Sigmoid colon (tissue), 7 donors: ENCODE measurements at regions of chr6 and their contacts with region 1.

Region 1: DNA sequence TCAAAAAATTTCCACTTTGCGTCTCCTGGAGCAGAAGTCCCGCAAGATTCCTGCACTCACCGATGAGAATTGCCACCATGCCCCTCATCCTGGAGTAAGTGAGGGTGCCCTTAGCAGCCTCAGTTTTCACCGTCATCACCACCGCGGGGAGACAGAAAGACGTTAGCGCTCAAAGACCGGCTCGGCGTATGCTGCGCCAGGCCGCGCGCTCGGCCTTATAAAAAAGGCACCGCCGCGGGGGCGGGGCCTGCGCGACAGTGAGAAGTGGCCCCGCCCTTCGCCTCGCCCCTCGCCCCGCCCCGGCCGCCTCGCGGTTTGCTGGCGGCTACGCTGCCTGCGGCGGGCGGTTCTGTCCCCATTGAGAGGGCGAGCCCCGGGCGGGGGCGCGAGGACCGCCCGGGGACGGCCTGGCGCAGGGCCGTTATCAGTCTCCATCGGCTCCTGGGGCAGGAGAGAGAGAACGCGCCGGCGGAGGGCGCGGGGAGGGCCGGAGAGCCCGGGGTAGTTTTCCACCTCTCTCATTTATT is 122.3 kb upstream of the SLC2A12 start:
- DNase-seq: peak; percentile 93
- H3K4me3 ChIP-seq: peak overlapping the region; percentile 56 to 75 (median 72)
- H3K27ac ChIP-seq: peak overlapping the region; percentile 80 to 97 (median 88)
- H3K4me1 ChIP-seq: peaks cover 0 to 32% (median 26%) of the 10 kb centered on the region in 4 donors
- H3K27me3 ChIP-seq: peaks cover 0 to 37% (median 0%) of the 10 kb centered on the region in 3 donors
- CTCF ChIP-seq: no peak
- EP300 ChIP-seq: peak in 1 of 4 donors; percentile 2
- POLR2A ChIP-seq: peak; percentile 70 to 74

Region 2: DNA sequence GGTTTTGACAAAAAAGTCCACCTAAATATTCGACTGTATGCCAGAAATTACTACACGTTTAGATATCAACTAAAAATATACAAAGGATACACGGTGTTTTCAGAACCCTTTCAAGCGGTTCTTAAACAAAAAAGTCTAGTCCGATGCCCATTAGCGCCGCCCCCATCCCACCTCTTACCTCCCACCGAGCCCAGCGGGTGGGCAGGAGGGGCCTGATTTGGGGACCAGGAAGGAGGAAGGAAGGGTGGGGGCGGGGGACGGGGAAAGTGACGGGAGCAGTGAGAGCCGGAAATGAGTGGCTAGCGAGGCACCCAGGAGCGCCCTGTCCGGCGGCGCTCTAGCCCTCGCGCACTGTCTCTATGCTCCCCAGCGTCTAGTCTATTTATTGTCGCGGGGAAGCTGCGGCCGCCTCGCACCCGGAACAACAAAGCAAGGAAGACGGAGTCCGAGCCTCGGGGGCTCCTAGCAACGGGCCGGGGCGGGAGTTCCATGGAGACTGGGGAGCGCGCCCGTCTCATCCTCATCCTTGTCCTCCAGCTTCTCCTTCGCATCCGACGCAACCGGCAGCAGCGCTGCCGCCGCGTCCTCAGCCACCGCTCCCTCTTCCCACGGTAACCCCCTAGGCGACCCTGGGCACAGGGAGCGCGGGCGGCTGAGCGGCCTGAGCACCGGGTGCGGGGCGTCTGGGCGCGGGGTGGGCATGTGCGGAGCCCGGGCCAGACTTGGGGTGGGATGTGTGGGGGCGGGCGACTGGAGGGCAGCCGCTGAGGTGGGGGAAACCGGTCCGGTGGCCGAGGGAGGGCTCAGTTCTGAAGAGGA is 221.7 kb before region 1 on chr6 and contains the start of gene TBPL1:
- intact Hi-C with region 1: loop called (anchors 10 kb)
- DNase-seq: peak; percentile 96
- H3K4me3 ChIP-seq: peak within 1 kb of the TSS; percentile 93 to 98 (median 95)
- H3K27ac ChIP-seq: peak within 1 kb of the TSS; percentile 91 to 97 (median 95)
- H3K4me1 ChIP-seq: peaks cover 0 to 29% (median 25%) of the 10 kb centered on the region in 4 donors
- H3K27me3 ChIP-seq: no peaks in the 10 kb centered on the region
- CTCF ChIP-seq: no peak
- EP300 ChIP-seq: no peak
- POLR2A ChIP-seq: peak; percentile 24 to 47
- total RNA-seq, gene TBPL1: 6.6 to 13.2 (median 8.4) TPM

Region 3: GRCh38 chr6:134272374-134272773 is 97.6 kb after region 1 on chr6:
- intact Hi-C with region 1: no loop called
- DNase-seq: no peak
- H3K4me3 ChIP-seq: no peak overlapping the region
- H3K27ac ChIP-seq: no peak overlapping the region
- H3K4me1 ChIP-seq: no peaks in the 10 kb centered on the region
- H3K27me3 ChIP-seq: no peaks in the 10 kb centered on the region
- CTCF ChIP-seq: no peak
- EP300 ChIP-seq: no peak
- POLR2A ChIP-seq: no peak

Region 4: GRCh38 chr6:134640975-134641429 is 466.3 kb after region 1 on chr6:
- intact Hi-C with region 1: loop called (anchors 2 kb)
- DNase-seq: peak; percentile 81
- H3K4me3 ChIP-seq: no peak overlapping the region
- H3K27ac ChIP-seq: no peak overlapping the region
- H3K4me1 ChIP-seq: peaks cover 0 to 12% (median 7%) of the 10 kb centered on the region in 4 donors
- H3K27me3 ChIP-seq: no peaks in the 10 kb centered on the region
- CTCF ChIP-seq: peak; percentile 61 to 86 (median 78)
- EP300 ChIP-seq: no peak
- POLR2A ChIP-seq: no peak

Region 5: GRCh38 chr6:134822920-134823709 is 648.4 kb after region 1 on chr6:
- intact Hi-C with region 1: loop called (anchors 5 kb)
- DNase-seq: no peak
- H3K4me3 ChIP-seq: no peak overlapping the region
- H3K27ac ChIP-seq: no peak overlapping the region
- H3K4me1 ChIP-seq: peaks cover 0 to 19% (median 7%) of the 10 kb centered on the region in 4 donors
- H3K27me3 ChIP-seq: no peaks in the 10 kb centered on the region
- CTCF ChIP-seq: peak; percentile 32 to 74 (median 62)
- EP300 ChIP-seq: no peak
- POLR2A ChIP-seq: no peak

Region 6: GRCh38 chr6:134882426-134883038 is 707.8 kb after region 1 on chr6:
- intact Hi-C with region 1: loop called (anchors 1 kb)
- DNase-seq: peak; percentile 78
- H3K4me3 ChIP-seq: no peak overlapping the region
- H3K27ac ChIP-seq: no peak overlapping the region
- H3K4me1 ChIP-seq: no peaks in the 10 kb centered on the region
- H3K27me3 ChIP-seq: peaks cover 0 to 12% (median 0%) of the 10 kb centered on the region in 3 donors
- CTCF ChIP-seq: peak; percentile 46 to 90 (median 87)
- EP300 ChIP-seq: no peak
- POLR2A ChIP-seq: no peak

Region 7: DNA sequence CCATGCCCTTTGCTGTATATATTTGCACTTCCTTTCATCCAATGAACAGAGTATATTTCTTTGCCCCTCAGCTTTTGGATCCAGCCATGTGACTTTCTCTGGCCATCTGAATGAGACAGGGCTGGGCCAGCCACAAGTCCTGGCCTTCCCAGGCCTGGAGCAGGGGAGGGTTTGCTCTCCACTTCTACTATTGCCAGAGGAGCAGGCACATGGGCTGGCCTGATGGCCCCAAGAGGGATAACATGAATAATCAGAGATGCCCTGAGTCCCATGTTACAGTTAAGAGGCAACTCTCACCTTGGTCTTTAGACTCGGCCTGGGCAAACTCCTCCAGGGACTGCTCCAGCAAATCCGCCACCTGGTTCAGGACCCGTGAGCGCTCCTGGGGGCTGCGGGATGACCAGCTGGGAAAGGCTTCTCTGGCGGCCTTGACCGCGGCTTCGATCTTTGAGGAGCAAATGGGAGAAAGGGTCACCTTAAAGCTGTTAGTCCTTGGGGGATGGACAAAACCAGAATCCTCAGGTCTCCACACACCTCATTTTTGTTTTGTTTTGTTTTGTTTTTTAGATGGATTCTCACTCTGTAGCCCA is 768.9 kb after region 1 on chr6:
- intact Hi-C with region 1: loop called (anchors 5 kb)
- DNase-seq: no peak
- H3K4me3 ChIP-seq: no peak overlapping the region
- H3K27ac ChIP-seq: no peak overlapping the region
- H3K4me1 ChIP-seq: no peaks in the 10 kb centered on the region
- H3K27me3 ChIP-seq: no peaks in the 10 kb centered on the region
- CTCF ChIP-seq: no peak
- EP300 ChIP-seq: no peak
- POLR2A ChIP-seq: no peak

Region 8: GRCh38 chr6:135054569-135055498 is 880.1 kb after region 1 on chr6 and contains the start of gene HBS1L:
- intact Hi-C with region 1: loop called (anchors 10 kb)
- DNase-seq: peak; percentile 98
- H3K4me3 ChIP-seq: peak within 1 kb of the TSS; percentile 77 to 94 (median 86)
- H3K27ac ChIP-seq: peak within 1 kb of the TSS; percentile 87 to 91 (median 89)
- H3K4me1 ChIP-seq: peaks cover 0 to 24% (median 20%) of the 10 kb centered on the region in 4 donors
- H3K27me3 ChIP-seq: no peaks in the 10 kb centered on the region
- CTCF ChIP-seq: no peak
- EP300 ChIP-seq: peak in 1 of 4 donors; percentile 73
- POLR2A ChIP-seq: peak; percentile 81 to 89
- total RNA-seq, gene HBS1L: 37.1 to 61.9 (median 53.3) TPM